Activated CD4-positive, alpha-beta memory T cell treated with anti-CD3 and anti-CD28 coated beads for 36 hours (primary cell): ENCODE measurements at regions of chr6 and their contacts with region 1.

Region 1: GRCh38 chr6:52227495-52227894 is 16.8 kb downstream of the IL17F start:
- DNase-seq: peak; percentile 90
- H3K4me3 Mint-ChIP-seq: no peak overlapping the region
- H3K27ac Mint-ChIP-seq: no peak overlapping the region
- H3K4me1 Mint-ChIP-seq: peaks cover 20% of the 10 kb centered on the region
- H3K27me3 Mint-ChIP-seq: peaks cover 39% of the 10 kb centered on the region

Region 2: GRCh38 chr6:52201046-52201445 is 26.4 kb before region 1 on chr6:
- CTCF ChIA-PET with region 1: no interaction called
- POLR2A ChIA-PET with region 1: no interaction called
- intact Hi-C with region 1: loop called (anchors 1 kb)
- DNase-seq: no peak
- H3K4me3 Mint-ChIP-seq: no peak overlapping the region
- H3K27ac Mint-ChIP-seq: peak overlapping the region; percentile 61
- H3K4me1 Mint-ChIP-seq: peaks cover 9% of the 10 kb centered on the region
- H3K27me3 Mint-ChIP-seq: peaks cover 22% of the 10 kb centered on the region